Activated CD4-positive, alpha-beta memory T cell treated with anti-CD3 and anti-CD28 coated beads for 36 hours (primary cell): ENCODE measurements at regions of chr1 and their contacts with region 1.

Region 1: DNA sequence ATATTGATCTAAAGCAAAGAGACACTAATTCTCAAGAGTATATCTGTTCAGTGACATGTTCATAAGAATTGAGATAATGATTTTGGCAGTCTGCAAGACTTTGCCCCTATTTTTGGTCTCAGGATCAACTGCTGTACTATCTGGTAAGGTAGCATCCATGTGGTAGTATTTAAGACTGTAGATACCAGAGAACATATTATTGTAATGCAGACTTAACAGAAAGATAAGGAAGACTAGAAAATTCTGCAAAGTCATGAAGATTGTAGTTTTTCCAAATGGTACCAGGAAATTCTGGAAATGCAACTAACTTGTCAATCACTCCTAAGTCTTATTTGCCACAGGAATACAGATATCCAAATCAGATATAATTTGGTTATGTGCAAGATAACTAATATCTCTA is 35.1 kb downstream of the RNF2 start:
- DNase-seq: no peak
- H3K4me3 Mint-ChIP-seq: no peak overlapping the region
- H3K27ac Mint-ChIP-seq: no peak overlapping the region
- H3K4me1 Mint-ChIP-seq: peaks cover 22% of the 10 kb centered on the region
- H3K27me3 Mint-ChIP-seq: no peaks in the 10 kb centered on the region

Region 2: DNA sequence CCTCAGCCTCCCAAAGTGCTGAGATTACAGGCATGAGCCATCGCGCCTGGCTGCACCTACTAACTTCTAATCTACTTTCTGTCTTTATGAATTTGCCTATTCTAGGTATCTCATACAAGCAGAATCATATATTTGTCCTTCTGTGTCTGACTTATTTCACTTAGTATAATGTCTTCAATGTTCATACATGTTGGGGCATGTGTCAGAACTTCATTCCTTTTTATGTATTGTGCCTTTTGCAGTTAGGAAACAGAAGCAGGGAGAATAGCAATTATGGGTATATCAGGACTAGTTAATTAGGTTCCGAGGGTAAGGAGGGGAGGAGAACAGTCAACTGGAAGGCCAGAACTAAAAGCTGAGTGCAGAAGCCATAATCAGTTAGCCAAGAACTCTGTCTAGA is 88.2 kb before region 1 on chr1:
- CTCF ChIA-PET with region 1: no interaction called
- POLR2A ChIA-PET with region 1: no interaction called
- intact Hi-C with region 1: loop called (anchors 10 kb)
- DNase-seq: no peak
- H3K4me3 Mint-ChIP-seq: no peak overlapping the region
- H3K27ac Mint-ChIP-seq: no peak overlapping the region
- H3K4me1 Mint-ChIP-seq: no peaks in the 10 kb centered on the region
- H3K27me3 Mint-ChIP-seq: peaks cover 14% of the 10 kb centered on the region